Dendritic cell treated with granulocyte-macrophage colony-stimulating factor and Interleukin-4, amounts not matched to agents 40 ng/mL and 50 ng/mL, for 4 days (primary cell): ENCODE measurements at regions of chr10 and their contacts with region 1.

Region 1: GRCh38 chr10:128064108-128064969 is 61.9 kb downstream of the MKI67 start:
- H3K4me3 Mint-ChIP-seq: peak overlapping the region; percentile 73
- H3K27ac Mint-ChIP-seq: peak overlapping the region; percentile 86
- H3K4me1 Mint-ChIP-seq: peaks cover 97% of the 10 kb centered on the region
- H3K27me3 Mint-ChIP-seq: no peaks in the 10 kb centered on the region

Region 2: DNA sequence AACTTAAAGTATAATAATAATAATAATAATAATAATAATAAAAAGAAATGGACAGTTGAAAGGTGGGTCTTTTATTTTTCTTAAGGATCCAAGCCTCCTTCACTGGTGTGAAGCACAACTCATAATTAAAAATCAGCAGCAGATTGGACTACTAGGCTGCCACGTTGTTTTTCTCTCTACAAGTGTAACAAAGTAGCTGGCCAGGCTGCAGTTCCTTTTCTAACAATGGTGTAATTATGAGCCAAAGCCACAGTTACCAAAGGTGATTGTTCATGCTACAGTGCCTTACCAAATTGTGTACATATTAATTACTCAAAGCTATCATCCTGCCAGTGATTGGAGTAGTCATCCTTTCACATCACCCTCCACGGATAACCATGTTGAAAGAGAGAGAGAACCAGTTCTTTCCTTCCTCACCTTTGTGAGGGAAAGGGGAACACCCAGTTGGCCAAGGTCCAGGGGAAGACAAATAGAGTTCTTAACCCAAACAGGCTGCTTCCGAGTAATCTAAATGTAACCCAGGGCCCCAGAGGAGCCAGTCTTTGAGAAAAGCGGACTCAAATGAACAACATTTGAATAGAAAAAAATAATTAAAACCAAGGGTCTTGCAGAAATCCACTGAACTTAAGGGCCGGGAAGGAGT is 601.6 kb before region 1 on chr10:
- intact Hi-C with region 1: no loop called
- H3K4me3 Mint-ChIP-seq: no peak overlapping the region
- H3K27ac Mint-ChIP-seq: no peak overlapping the region
- H3K4me1 Mint-ChIP-seq: no peaks in the 10 kb centered on the region
- H3K27me3 Mint-ChIP-seq: no peaks in the 10 kb centered on the region

Region 3: DNA sequence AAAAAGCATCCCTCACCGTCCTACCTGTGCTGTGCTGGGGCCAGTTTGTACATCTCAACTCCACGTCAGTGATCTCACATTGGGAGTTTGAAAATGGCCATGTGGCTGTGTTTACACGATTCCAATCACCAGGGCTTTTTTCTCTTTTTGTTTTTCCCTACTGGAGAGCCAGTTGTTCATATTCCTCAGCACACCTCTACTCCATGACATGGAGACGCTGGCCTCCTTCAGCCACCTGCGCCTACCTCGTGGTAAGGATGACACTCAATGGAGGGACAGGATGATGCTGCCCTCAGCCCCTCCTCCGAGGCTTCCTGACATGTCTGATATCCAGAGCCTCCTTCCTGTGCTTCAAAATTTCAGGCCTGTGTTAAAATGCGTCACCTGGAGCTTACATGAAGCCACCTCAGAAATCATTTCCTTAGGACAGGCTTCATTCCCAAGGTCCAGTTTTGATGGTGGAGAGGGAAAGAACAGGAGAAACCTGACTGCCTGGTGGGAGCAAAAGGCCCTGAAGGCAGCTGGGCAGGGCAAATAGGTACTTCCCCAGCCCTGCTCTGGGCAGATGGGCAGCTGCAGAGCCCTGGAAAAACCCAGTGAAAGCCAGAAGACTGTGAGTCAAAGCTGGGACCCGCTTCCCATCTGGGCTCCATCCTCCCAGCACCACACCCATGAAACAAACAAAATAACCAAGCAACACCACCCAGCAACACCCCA is 181.8 kb before region 1 on chr10:
- intact Hi-C with region 1: loop called (anchors 1 kb)
- H3K4me3 Mint-ChIP-seq: no peak overlapping the region
- H3K27ac Mint-ChIP-seq: peak overlapping the region; percentile 81
- H3K4me1 Mint-ChIP-seq: peaks cover 92% of the 10 kb centered on the region
- H3K27me3 Mint-ChIP-seq: no peaks in the 10 kb centered on the region

Region 4: DNA sequence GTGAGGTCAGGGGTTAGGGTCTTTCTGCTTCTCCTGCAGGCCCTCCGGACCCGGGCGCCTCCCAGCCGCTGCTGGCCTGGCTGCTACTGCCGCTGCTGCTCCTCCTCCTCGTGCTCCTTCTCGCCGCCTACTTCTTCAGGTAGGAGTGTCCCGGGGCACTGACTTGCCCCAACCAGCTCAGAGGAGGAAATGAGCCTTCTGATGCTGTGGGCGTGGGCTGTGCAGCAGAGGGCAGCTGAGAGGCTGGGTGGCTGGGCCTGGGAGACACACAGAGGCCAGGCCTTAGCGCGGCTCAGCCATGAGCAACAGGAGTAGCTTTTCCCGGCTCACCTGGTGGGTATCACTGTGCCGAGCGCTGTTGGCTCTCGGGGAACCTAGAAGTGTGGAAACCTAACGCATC is 17.0 kb before region 1 on chr10:
- intact Hi-C with region 1: loop called (anchors 1 kb)
- H3K4me3 Mint-ChIP-seq: peak overlapping the region; percentile 90
- H3K27ac Mint-ChIP-seq: peak overlapping the region; percentile 86
- H3K4me1 Mint-ChIP-seq: peaks cover 70% of the 10 kb centered on the region
- H3K27me3 Mint-ChIP-seq: no peaks in the 10 kb centered on the region